ENCODE measurements at regions of chr12 and their contacts with region 1.

Region 1: GRCh38 chr12:6062757-6063735 is 61.4 kb downstream of the VWF start:
- DNase-seq: peak; percentile 55
- H3K4me3 ChIP-seq: no peak overlapping the region
- H3K27ac ChIP-seq: no peak overlapping the region
- H3K4me1 ChIP-seq: no peaks in the 10 kb centered on the region
- CTCF ChIP-seq: peak; percentile 84

Region 2: GRCh38 chr12:5872735-5873134 is 190.3 kb before region 1 on chr12:
- CTCF ChIA-PET with region 1: no interaction called
- POLR2A ChIA-PET with region 1: no interaction called
- intact Hi-C with region 1: no loop called
- DNase-seq: no peak
- H3K4me3 ChIP-seq: no peak overlapping the region
- H3K27ac ChIP-seq: no peak overlapping the region
- H3K4me1 ChIP-seq: no peaks in the 10 kb centered on the region
- CTCF ChIP-seq: 0 out of 2 replicates have a peak, but pooled peaks have one; percentile 35

Region 3: DNA sequence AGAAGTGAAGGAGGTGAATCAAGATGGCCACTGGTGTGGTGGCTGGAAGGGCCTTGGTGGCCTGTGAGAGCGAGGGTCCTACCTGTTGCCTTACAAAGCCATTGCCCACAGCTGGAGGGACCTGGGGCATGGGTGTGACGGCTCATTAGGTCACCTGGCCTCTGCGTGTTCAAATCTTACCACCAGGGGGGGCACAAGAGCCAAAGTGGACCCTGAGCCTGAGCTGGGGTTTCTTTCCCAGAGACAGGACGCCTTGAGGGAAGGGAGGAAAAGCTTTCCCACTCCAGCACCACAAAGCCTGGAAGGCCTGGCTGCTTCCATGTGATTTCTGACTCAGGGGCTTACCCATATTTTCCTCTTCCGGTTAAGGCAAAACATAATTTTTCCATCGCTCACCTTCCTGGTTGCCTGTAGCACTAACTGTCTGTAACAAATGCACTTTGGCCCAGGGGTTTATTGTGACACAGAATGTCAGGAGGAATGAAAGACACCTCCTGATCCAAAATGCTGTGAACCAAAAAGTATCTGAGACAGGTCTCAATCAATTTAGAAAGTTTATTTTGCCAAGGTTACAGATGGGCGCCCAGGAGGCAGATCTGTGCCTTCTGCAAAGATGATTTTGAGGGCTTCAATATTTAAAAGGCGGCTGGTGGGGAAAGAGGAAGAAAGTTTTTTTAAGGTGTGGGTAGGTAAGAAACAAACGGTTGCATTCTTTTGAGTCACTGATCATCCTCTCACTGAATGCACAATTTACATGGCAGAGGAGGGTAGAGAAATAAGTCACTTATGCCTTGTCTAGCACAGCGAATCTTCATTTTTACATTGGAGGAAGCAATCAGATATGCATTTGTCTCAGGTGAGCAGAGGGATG is 132.9 kb after region 1 on chr12:
- CTCF ChIA-PET with region 1: no interaction called
- POLR2A ChIA-PET with region 1: no interaction called
- intact Hi-C with region 1: loop called (anchors 2 kb)
- DNase-seq: peak; percentile 73
- H3K4me3 ChIP-seq: no peak overlapping the region
- H3K27ac ChIP-seq: no peak overlapping the region
- H3K4me1 ChIP-seq: peaks cover 14% of the 10 kb centered on the region
- CTCF ChIP-seq: peak; percentile 87

Region 4: GRCh38 chr12:6278439-6279255 is 215.6 kb after region 1 on chr12:
- CTCF ChIA-PET with region 1: no interaction called
- POLR2A ChIA-PET with region 1: interaction called, 3 read pairs
- intact Hi-C with region 1: loop called (anchors 1 kb)
- DNase-seq: peak; percentile 75
- H3K4me3 ChIP-seq: peak overlapping the region; percentile 65
- H3K27ac ChIP-seq: no peak overlapping the region
- H3K4me1 ChIP-seq: peaks cover 7% of the 10 kb centered on the region
- CTCF ChIP-seq: peak; percentile 82

Region 5: DNA sequence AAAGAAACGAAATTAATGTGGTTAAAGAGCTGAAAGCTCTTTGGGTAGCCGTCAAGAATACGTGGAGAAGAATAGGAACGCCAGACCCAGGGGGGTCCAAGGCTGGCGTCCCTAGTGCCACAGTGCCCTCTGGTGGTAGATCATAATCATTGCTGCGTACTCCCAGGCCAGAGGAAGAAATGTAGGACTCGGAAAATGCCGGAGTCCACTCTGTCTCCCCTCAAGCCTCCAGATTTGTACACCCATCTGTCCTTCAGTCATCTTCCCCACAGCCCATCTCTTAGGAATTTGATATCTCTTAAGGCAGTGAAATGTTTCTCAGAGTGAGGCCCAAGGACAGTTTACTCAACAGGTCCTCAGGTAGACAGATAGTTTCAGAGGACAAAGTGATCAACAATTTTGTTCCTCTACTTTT is 222.0 kb after region 1 on chr12:
- CTCF ChIA-PET with region 1: no interaction called
- POLR2A ChIA-PET with region 1: no interaction called
- intact Hi-C with region 1: loop called (anchors 1 kb)
- DNase-seq: peak; percentile 74
- H3K4me3 ChIP-seq: no peak overlapping the region
- H3K27ac ChIP-seq: no peak overlapping the region
- H3K4me1 ChIP-seq: no peaks in the 10 kb centered on the region
- CTCF ChIP-seq: peak; percentile 98